ENCODE measurements at regions of chr6 and their contacts with region 1.

Region 1: DNA sequence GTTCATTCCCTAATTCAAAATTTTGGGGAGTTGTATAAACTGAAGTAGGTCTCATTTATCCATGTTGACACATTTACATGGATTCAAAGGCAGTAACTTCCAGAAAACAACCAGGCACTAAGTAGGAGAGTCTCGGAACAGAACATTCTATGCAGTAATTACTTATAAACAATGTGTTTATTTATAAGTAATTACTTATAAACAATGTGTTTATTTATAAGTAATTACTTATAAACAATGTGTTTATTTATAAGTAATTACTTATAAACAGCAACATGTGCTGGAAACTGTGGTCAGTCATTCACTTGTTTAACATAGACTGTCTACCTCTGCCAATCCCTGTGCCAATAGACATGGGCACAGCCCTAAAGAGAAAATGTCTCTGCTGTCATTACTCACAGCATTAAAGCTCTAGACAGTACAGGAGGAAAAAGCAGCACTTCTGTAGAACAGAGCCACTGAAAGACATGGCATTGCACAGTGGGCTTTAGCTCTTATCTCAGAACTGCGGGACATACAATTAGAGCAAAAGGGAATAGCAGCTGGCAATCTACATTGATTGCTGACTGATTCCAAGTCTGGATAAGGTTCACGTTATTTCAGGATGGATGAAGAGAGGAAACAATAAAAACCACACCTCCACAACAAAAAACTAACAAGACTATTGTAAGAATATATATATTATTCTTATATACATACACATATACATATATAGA is 188.2 kb downstream of the WDR27 start:
- DNase-seq: no peak
- ATAC-seq: no peak
- H3K4me3 ChIP-seq: no peak overlapping the region
- H3K27ac ChIP-seq: no peak overlapping the region
- H3K4me1 ChIP-seq: no peaks in the 10 kb centered on the region
- H3K27me3 ChIP-seq: no peaks in the 10 kb centered on the region
- CTCF ChIP-seq: no peak

Region 2: GRCh38 chr6:169556758-169557548 is 43.3 kb after region 1 on chr6:
- CTCF ChIA-PET with region 1: no interaction called
- POLR2A ChIA-PET with region 1: no interaction called
- intact Hi-C with region 1: loop called (anchors 5 kb)
- DNase-seq: no peak
- ATAC-seq: no peak
- H3K4me3 ChIP-seq: no peak overlapping the region
- H3K27ac ChIP-seq: no peak overlapping the region
- H3K4me1 ChIP-seq: peaks cover 17% of the 10 kb centered on the region
- H3K27me3 ChIP-seq: no peaks in the 10 kb centered on the region
- CTCF ChIP-seq: no peak